ENCODE measurements at regions of chr17 and their contacts with region 1.

Region 1: DNA sequence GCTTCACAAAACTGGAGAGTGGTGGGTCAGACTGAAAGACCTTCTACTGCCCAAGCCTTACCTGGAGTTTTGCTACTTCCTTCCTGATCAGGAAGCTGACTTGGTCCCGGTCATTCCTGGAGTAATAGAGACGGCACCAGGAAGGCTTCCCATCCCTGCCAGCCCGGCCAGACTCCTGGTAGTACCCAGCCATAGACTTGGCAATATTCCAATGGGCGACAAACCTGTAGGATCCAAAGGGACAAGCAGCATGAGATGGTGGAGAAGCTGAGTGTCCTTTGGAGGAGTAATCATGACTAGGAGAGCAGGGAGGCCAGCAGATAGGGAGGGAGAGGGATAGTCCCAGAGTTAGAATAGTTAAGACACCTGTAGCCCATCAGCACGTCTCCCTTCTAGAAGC is 8.7 kb downstream of the RECQL5 start:
- DNase-seq: no peak
- H3K4me3 Mint-ChIP-seq: no peak overlapping the region
- H3K27ac Mint-ChIP-seq: no peak overlapping the region
- H3K4me1 Mint-ChIP-seq: peaks cover 6% of the 10 kb centered on the region
- H3K27me3 Mint-ChIP-seq: no peaks in the 10 kb centered on the region

Region 2: DNA sequence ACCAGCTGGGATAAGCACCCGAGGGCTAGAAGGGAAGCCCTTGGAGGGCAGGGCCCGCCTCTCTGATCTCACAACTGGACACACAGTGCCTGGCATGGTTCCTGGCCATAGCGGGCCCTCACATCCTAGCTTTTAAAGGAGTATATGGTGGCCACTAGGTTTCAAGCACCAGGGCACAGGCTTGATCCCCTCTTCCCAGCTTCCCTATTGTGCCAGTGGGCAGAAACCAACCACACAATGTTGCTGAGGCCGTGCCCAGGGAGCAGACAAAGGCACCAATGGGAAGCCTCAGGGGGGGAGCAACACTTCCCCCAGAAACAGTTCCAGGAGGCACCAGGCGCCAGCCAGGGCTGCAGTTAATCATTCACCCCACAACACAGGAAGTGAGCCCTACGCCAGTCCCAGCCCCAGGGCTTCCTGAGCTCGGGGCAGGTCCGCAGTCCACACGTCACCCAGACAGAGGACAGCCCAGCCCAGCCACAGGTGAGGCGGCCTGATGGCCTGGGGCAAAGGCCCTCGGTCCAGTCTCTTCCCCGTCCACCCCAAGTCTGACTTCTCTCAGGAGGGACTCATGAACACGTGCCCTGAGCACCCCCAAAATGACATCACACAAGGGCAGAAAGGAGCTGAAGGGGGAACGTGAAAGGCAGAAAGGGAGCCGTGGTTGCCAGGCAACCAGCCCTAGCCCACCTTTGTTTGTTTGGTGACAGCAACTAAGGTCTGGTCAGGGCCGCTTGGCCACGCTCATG is 12.2 kb before region 1 on chr17:
- CTCF ChIA-PET with region 1: interaction called, 11 read pairs
- POLR2A ChIA-PET with region 1: no interaction called
- DNase-seq: no peak
- H3K4me3 Mint-ChIP-seq: no peak overlapping the region
- H3K27ac Mint-ChIP-seq: peak overlapping the region; percentile 80
- H3K4me1 Mint-ChIP-seq: peaks cover 15% of the 10 kb centered on the region
- H3K27me3 Mint-ChIP-seq: no peaks in the 10 kb centered on the region

Measured in activated CD4-positive, alpha-beta T cell treated with anti-CD3 and anti-CD28 coated beads, Interleukin-2, amount 10 ng/mL, durations not matched to agents 7 days and 5 days (primary cell).